HCT116 (cell line): ENCODE measurements at regions of chr3 and their contacts with region 1.

Region 1: DNA sequence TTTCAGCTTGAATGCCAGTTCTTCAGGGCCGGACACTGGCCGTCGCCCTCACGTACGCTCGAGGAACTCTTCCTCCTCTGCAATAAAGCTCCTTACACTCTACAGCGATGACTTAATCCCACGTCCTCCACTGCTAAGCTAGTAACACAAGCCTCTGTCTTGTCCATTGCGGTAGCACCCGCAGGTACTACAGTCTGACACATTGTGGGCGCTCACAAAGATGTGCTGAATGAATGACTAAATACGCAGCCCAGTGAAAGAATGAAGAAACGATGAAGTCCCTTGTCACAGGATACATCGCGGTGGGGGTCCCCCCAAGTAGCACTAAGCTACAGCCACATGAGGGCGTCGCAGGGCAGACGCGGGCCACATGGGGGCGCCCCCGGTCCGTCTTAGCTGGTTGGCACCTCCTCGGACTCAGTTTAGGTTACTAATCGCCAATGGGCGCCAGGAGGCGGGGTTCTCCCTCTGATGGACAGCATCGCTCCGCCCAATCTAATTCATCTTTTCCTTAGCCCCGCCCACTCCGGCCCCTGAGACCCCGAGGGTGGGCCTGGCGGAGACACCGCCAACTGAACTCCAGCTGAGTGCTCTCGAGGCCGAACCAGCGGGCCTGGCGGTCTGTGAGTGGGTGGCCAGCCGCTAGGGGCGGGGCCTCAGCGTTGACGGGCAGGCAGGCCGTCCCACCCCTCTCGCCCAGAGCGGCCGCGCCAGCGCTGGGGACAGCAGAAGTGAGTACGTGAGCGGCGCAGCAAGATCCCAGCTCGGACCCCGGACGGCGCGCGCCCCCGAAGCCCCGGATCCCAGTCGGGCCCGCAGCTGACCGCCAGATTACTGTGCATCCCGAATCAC is at the start of gene EPHB3:
- DNase-seq: peak; percentile 98
- ATAC-seq: peak; percentile 93
- H3K4me3 ChIP-seq: peak within 1 kb of the TSS; percentile 64 to 74
- H3K27ac ChIP-seq: peak within 1 kb of the TSS; percentile 48; the same call in 1 of the 2 replicates
- H3K4me1 ChIP-seq: peaks cover 18 to 28% of the 10 kb centered on the region in 2 experiments
- H3K27me3 ChIP-seq: no peaks in the 10 kb centered on the region
- CTCF ChIP-seq: peak in 2 of 3 experiments; percentile 99 to 100; a peak in 4 of 6 replicates
- POLR2A ChIP-seq: peak; percentile 23
- RAD21 ChIP-seq: no peak
- total RNA-seq, gene EPHB3: 6.5 TPM

Region 2: DNA sequence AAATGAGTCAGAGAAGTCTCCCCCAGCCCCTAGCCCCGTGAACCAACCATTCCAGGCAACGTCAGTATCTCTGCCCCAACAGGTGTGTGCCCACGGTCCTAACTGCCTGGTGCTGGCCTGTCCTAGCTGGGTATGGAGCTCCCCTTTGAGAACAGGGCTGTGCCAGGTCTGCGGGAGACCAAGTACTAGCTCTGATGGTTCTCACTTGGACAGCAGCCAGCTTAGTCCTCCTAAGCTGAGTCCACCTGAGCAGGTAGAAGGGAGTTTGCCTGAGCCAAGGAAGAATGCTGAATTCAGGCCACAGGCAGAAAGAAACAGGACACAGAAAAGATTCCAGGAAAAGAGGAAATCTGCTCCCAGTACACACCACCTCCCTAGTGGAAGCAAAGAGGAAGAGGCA is 643.5 kb before region 1 on chr3:
- CTCF ChIA-PET with region 1: no interaction called
- POLR2A ChIA-PET with region 1: no interaction called
- RAD21 ChIA-PET with region 1: no interaction called
- intact Hi-C with region 1: no loop called
- DNase-seq: no peak
- ATAC-seq: no peak
- H3K4me3 ChIP-seq: no peak overlapping the region
- H3K27ac ChIP-seq: no peak overlapping the region
- H3K4me1 ChIP-seq: peaks cover 0 to 23% of the 10 kb centered on the region in 2 experiments; a peak in 2 of 4 replicates
- H3K27me3 ChIP-seq: no peaks in the 10 kb centered on the region
- CTCF ChIP-seq: no peak
- POLR2A ChIP-seq: no peak
- RAD21 ChIP-seq: no peak

Region 3: DNA sequence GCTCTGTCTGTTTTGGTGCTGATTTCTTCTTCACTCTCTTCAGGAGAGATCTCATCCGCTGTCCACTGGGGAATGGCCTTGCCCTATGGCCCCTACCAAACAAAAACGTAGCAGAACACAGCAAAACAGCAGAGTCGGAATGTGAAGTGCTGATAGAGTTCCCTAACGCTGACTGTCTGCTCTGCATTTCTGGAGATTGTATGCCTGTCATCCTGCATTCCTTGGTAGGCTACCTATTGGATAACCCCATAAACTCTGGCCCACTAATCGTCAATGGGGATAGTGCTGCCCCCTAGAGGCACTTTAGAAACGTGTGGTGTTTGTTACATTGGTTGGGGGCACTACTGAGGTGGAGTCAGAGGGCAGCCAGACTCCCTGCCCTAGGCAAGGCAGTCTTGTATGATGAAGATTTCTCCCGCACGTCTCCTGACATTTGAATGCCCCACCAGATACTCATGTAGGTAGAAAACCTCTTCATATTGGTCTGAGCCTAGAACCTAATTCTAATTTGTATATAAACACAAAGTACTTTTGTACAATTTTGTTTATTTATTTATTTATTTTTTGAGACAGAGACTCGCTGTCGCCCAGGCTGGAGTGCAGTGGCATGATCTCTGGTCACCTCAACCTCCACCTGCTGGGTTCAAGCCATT is 166.2 kb after region 1 on chr3:
- CTCF ChIA-PET with region 1: no interaction called
- POLR2A ChIA-PET with region 1: interaction called, 3 read pairs
- RAD21 ChIA-PET with region 1: interaction called, 3 to 4 read pairs
- intact Hi-C with region 1: loop called (anchors 1 kb)
- DNase-seq: peak; percentile 81
- ATAC-seq: peak; percentile 100
- H3K4me3 ChIP-seq: no peak overlapping the region
- H3K27ac ChIP-seq: no peak overlapping the region
- H3K4me1 ChIP-seq: peaks cover 0 to 8% of the 10 kb centered on the region in 2 experiments; a peak in 2 of 4 replicates
- H3K27me3 ChIP-seq: no peaks in the 10 kb centered on the region
- CTCF ChIP-seq: peak; percentile 85 to 97 (median 89)
- POLR2A ChIP-seq: no peak
- RAD21 ChIP-seq: peak; percentile 85

Region 4: DNA sequence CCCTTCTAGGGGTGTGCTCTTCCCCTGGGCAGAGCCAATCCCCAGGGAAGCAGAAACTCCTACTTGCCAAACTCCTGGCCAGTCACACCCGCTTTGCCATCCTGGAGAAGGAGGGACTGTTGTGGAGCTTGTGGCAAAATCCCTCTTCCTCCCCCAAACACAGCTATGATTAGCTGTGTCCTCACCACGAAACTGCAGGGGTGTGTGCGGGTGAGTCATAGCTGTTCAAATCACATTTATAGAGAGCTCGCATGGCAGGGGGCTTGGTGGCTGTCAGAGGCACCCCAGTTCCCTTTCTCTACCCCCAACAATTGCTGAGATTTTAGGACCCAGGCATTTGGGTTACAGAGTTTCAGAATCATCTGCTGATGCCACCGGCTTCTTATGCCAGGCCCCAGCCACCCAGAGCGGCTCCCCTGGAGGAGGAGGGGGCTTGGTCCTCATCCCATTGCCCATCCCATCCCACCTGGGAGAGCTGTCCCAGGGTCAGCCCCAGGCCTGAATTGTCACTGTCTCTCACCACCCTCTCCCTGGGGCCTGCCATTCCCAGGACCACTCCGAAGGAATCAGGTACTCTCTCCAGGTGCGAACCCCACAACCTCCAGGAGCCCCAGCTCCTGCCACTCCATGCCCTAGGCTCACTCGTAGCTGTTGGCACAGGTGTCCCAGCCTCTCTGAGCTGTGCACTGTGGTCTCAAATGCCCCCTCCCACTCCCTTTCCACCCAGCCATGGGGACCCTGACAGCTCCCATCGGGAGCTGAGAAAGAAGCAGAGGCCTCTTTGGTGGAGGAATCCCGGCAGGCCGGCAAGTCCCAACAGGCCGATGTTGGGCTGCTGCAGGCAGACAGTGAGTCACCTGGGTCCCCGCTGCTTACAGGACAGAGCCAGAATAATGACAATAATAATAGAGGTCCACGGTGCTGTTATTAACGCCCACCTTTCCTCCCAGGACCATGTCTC is 179.5 kb after region 1 on chr3:
- CTCF ChIA-PET with region 1: interaction called, 42 read pairs
- POLR2A ChIA-PET with region 1: interaction called, 4 read pairs
- RAD21 ChIA-PET with region 1: interaction called, 3 to 4 read pairs
- intact Hi-C with region 1: no loop called
- DNase-seq: peak; percentile 54
- ATAC-seq: peak; percentile 89
- H3K4me3 ChIP-seq: peak overlapping the region in 1 of 2 experiments; percentile 38; a peak in 2 of 4 replicates
- H3K27ac ChIP-seq: peak overlapping the region; percentile 57
- H3K4me1 ChIP-seq: peaks cover 20 to 37% of the 10 kb centered on the region in 2 experiments
- H3K27me3 ChIP-seq: no peaks in the 10 kb centered on the region
- CTCF ChIP-seq: no peak
- POLR2A ChIP-seq: no peak
- RAD21 ChIP-seq: no peak

Region 5: DNA sequence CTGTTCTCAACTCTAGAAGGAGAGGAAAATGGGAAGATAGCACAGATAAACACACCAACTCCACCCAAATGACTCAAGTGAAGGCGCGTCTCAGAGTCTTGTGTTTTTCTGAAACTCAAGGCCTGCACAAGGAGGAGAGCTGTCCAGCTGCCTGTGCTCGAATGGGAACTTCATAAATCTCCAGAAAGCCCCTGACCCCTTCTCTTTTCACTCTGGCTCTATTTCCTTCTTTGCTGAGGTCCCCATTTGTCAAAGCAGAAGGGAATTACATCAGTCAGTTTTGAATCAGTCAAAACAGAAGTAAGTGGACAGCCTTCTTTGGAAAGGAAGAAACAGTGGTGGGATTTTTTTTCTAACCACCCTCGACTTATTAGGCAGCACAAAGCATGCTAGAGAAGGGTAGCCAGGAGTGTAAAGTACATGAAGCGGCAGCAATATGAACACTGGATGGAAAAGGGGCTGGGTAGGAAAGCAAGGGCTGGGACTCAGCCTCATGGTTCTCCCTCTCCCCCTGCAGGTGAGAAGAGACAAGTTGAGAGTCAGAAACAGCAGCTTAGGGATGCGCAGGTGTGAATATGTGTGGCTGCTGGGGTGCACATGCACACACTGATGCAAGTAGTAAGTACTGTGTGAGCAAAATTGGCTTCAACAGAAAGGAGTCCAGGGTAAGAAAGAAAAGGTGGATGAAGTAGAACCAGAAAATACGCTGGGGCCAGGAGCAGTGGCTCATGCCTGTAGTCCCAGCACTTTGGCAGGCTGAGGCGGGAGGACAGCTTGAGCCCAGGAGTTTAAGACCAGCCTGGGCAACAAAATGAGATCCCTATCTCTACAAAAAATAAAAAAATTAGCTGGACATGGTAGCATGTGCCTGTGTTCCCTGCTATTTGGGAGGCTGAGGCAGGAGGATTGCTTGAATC is 187.2 kb after region 1 on chr3:
- CTCF ChIA-PET with region 1: interaction called, 42 read pairs
- POLR2A ChIA-PET with region 1: interaction called, 8 read pairs
- RAD21 ChIA-PET with region 1: interaction called, 10 to 16 read pairs
- intact Hi-C with region 1: loop called (anchors 1 kb)
- DNase-seq: peak; percentile 48
- ATAC-seq: peak; percentile 99
- H3K4me3 ChIP-seq: no peak overlapping the region
- H3K27ac ChIP-seq: no peak overlapping the region
- H3K4me1 ChIP-seq: peaks cover 0 to 7% of the 10 kb centered on the region in 2 experiments; a peak in 2 of 4 replicates
- H3K27me3 ChIP-seq: no peaks in the 10 kb centered on the region
- CTCF ChIP-seq: peak; percentile 64 to 88 (median 71)
- POLR2A ChIP-seq: no peak
- RAD21 ChIP-seq: peak; percentile 89

Region 6: DNA sequence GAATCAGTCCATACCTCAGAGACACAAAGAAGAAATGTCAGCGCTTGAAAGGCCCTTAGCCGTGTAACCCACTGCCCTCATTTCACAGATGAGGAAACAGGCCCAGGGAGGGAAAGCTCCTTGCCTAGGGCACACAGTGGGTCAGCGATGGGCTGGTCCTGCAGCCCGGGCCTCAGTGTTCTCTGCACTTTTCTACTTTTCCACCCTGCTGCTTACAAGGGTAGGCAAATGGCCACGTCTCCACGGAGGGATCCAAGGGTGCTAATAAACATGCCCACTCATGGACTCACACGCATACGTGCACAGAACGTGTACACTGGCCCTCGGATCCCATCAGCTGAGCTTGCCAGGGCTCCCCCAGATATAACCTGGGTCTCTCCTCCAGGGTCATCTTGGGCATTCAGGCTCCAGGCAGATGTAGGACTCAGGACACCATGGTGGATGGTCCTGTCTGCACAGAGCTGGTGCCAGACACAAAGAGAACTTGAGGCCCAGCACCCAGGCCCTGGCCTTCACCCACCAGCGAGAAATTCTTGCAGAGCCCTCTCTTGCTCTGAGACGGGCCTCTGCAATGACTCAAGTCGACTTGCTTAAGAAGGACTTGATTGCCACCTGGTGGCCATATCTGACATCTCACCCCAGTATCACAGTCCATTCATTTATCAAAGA is 216.2 kb after region 1 on chr3:
- CTCF ChIA-PET with region 1: interaction called, 8 read pairs
- POLR2A ChIA-PET with region 1: interaction called, 8 read pairs
- RAD21 ChIA-PET with region 1: interaction called, 6 to 7 read pairs
- intact Hi-C with region 1: loop called (anchors 1 kb)
- DNase-seq: peak; percentile 91
- ATAC-seq: peak; percentile 97
- H3K4me3 ChIP-seq: no peak overlapping the region
- H3K27ac ChIP-seq: no peak overlapping the region
- H3K4me1 ChIP-seq: peaks cover 0 to 5% of the 10 kb centered on the region in 2 experiments; a peak in 1 of 4 replicates
- H3K27me3 ChIP-seq: 0 out of 2 replicates have a peak, but pooled peaks cover 6% of the 10 kb centered on the region
- CTCF ChIP-seq: peak; percentile 64 to 98 (median 83)
- POLR2A ChIP-seq: no peak
- RAD21 ChIP-seq: peak; percentile 99

Region 7: GRCh38 chr3:184788751-184789150 is 227.5 kb after region 1 on chr3:
- CTCF ChIA-PET with region 1: interaction called, 13 read pairs
- POLR2A ChIA-PET with region 1: interaction called, 4 read pairs
- RAD21 ChIA-PET with region 1: no interaction called
- intact Hi-C with region 1: no loop called
- DNase-seq: no peak
- ATAC-seq: peak; percentile 90
- H3K4me3 ChIP-seq: no peak overlapping the region
- H3K27ac ChIP-seq: no peak overlapping the region
- H3K4me1 ChIP-seq: peaks cover 7 to 9% of the 10 kb centered on the region in 2 experiments
- H3K27me3 ChIP-seq: 0 out of 2 replicates have a peak, but pooled peaks cover 6% of the 10 kb centered on the region
- CTCF ChIP-seq: no peak
- POLR2A ChIP-seq: no peak
- RAD21 ChIP-seq: no peak

Region 8: GRCh38 chr3:184808021-184808420 is 246.7 kb after region 1 on chr3:
- CTCF ChIA-PET with region 1: interaction called, 3 read pairs
- POLR2A ChIA-PET with region 1: interaction called, 6 read pairs
- RAD21 ChIA-PET with region 1: interaction called in 1 of 2 experiments, 5 read pairs
- intact Hi-C with region 1: loop called (anchors 1 kb)
- DNase-seq: peak; percentile 44
- ATAC-seq: peak; percentile 56
- H3K4me3 ChIP-seq: no peak overlapping the region
- H3K27ac ChIP-seq: no peak overlapping the region
- H3K4me1 ChIP-seq: peaks cover 9 to 27% of the 10 kb centered on the region in 2 experiments; a peak in 3 of 4 replicates
- H3K27me3 ChIP-seq: no peaks in the 10 kb centered on the region
- CTCF ChIP-seq: peak; percentile 33 to 64 (median 52); a peak in 5 of 6 replicates
- POLR2A ChIP-seq: no peak
- RAD21 ChIP-seq: 0 out of 2 replicates have a peak, but pooled peaks have one; percentile 13